ENCODE measurements at regions of chr7 and their contacts with region 1.

Region 1: DNA sequence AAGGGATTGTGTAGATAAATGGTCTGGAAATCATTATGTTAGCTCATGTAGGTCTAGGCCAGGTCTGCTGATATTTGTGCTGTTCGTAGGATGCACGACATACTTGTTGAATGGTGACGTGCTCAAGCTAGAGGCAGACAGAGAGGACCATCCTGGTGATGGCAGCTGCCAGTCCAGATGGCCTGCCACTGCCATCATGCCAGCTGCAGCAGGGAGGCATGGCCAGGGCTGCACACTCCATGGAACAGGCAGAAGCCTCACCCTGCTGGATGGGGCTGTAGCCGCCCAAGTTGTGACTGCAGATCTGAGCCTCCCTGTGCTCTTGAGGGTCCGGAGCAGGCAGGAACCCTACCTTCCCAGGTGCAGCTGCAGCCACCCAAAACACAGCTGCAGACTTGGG is 80.3 kb downstream of the SPDYE5 start:
- DNase-seq: no peak
- H3K4me3 ChIP-seq: no peak overlapping the region
- H3K27ac ChIP-seq: no peak overlapping the region
- H3K4me1 ChIP-seq: peaks cover 6 to 26% of the 10 kb centered on the region in 2 donors
- H3K27me3 ChIP-seq: no peaks in the 10 kb centered on the region
- CTCF ChIP-seq: no peak
- POLR2A ChIP-seq: no peak

Region 2: DNA sequence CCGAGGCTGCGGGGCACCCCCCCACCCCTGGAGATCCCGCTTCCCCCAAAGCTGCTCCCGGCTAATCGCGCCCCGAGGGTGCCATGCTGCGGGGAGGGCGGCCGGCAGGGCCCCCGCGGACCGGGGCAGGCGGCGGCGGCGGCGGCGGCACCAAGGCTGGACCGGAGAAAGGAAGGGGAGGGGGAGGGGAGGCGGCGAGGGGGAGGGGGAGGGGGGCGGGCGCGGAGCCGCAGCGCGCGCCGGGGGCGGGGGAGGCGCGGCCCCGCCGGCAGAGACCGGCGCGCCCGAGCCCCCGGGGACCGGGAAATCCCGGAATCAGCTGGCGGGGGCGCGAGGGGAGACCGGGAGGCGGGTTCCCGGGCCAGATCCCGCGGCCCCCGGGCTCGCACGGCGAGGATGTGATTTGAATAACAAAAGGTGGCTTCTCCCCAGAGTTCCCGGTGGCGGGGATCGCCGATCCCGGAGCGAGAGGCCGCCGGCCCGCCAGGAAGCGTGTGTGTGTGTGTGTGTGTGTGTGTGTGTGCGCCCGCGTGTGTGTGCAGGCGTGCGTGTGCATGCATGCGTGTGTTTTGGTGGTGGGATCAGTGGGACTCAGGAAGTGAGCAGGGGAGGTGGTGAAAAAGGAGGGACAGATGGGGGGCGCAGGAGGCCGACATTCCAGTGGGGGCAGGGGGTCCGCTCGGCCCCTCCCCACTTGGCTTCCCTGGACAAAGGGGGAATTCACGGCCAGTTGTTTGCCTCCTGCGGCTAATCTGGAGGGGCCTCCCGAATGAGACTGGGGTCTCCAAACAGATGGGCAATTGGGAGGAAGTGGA is 66.9 kb after region 1 on chr7:
- intact Hi-C with region 1: loop called (anchors 5 kb)
- DNase-seq: peak; percentile 47 to 59
- H3K4me3 ChIP-seq: peak overlapping the region; percentile 14 to 74 (median 28)
- H3K27ac ChIP-seq: peak overlapping the region; percentile 47 to 89 (median 82)
- H3K4me1 ChIP-seq: peaks cover 12 to 18% of the 10 kb centered on the region in 2 donors
- H3K27me3 ChIP-seq: no peaks in the 10 kb centered on the region
- CTCF ChIP-seq: no peak
- POLR2A ChIP-seq: no peak